PC-9 (cell line): ENCODE measurements at regions of chr22 and their contacts with region 1.

Region 1: GRCh38 chr22:23767673-23768548 is at the start of gene CHCHD10:
- DNase-seq: peak; percentile 62 to 73
- H3K4me3 ChIP-seq: peak within 1 kb of the TSS; percentile 96
- H3K27ac ChIP-seq: no peak within 1 kb of the TSS
- H3K4me1 ChIP-seq: peaks cover 22% of the 10 kb centered on the region
- H3K27me3 ChIP-seq: no peaks in the 10 kb centered on the region
- CTCF ChIP-seq: peak; percentile 81
- total RNA-seq, gene CHCHD10: 37.0 and 43.5 TPM in 2 replicates

Region 2: GRCh38 chr22:23716811-23717801 is 50.8 kb before region 1 on chr22:
- CTCF ChIA-PET with region 1: interaction called, 6 read pairs
- POLR2A ChIA-PET with region 1: interaction called, 18 read pairs
- intact Hi-C with region 1: no loop called
- DNase-seq: peak; percentile 49 to 68
- H3K4me3 ChIP-seq: peak overlapping the region; percentile 92
- H3K27ac ChIP-seq: no peak overlapping the region
- H3K4me1 ChIP-seq: 0 out of 2 replicates have a peak, but pooled peaks cover 8% of the 10 kb centered on the region
- H3K27me3 ChIP-seq: no peaks in the 10 kb centered on the region
- CTCF ChIP-seq: no peak

Region 3: GRCh38 chr22:23789638-23790037 is 21.7 kb after region 1 on chr22:
- CTCF ChIA-PET with region 1: no interaction called
- POLR2A ChIA-PET with region 1: no interaction called
- intact Hi-C with region 1: no loop called
- DNase-seq: no peak
- H3K4me3 ChIP-seq: no peak overlapping the region
- H3K27ac ChIP-seq: no peak overlapping the region
- H3K4me1 ChIP-seq: peaks cover 21% of the 10 kb centered on the region
- H3K27me3 ChIP-seq: no peaks in the 10 kb centered on the region
- CTCF ChIP-seq: no peak

Region 4: DNA sequence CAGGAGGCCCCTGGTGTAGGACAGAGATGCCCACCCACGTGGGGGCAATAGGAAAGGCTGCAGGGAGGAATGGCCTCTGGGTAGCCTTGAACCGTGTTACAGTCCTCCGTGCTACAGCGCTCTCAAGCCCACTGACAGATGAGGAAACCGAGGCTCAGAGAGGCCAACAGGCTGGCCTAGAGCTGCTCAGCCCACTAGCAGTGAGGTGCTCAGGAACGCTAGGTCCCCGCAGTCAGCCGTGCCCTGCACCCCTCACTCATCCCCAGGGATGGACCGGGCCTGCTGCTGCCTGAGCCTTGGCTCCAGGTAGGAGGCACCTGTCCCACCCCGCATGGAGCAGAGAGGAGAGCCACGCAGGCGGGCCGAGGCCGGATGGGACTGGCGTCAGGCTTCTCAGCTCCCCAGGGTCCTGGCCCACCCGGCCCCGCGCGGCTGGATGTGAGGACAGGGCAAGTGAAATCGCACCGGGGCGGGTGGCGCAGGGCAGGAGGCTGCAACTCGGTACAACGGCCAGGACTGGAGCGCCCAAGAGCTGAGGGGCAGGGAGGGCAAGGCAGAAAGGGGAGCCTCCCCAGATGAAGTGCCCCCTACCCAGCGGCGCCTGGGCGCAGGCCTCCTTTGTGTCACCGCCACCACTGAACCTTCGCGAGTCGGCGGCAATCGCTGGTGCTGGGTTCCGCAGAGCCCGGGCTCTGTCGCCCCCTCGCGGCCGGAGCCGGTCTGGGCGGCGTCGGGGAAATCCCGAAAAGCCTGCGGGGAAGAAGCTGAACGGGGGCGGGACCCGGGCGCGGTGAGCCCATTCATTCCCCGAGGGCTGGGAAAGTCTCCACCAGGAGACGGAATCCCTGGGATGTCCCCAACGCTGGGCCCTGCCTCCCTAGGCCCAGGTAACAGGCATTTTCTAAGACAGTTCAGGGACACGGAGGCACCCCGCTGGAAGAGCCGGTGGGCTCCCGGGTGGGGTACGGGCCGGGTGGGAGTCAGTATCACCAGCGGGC is 81.4 kb after region 1 on chr22:
- CTCF ChIA-PET with region 1: interaction called, 10 read pairs
- POLR2A ChIA-PET with region 1: no interaction called
- intact Hi-C with region 1: no loop called
- DNase-seq: peak; percentile 51 to 84
- H3K4me3 ChIP-seq: no peak overlapping the region
- H3K27ac ChIP-seq: no peak overlapping the region
- H3K4me1 ChIP-seq: peaks cover 13% of the 10 kb centered on the region; the same call in 1 of the 2 replicates
- H3K27me3 ChIP-seq: no peaks in the 10 kb centered on the region
- CTCF ChIP-seq: peak; percentile 91

Region 5: DNA sequence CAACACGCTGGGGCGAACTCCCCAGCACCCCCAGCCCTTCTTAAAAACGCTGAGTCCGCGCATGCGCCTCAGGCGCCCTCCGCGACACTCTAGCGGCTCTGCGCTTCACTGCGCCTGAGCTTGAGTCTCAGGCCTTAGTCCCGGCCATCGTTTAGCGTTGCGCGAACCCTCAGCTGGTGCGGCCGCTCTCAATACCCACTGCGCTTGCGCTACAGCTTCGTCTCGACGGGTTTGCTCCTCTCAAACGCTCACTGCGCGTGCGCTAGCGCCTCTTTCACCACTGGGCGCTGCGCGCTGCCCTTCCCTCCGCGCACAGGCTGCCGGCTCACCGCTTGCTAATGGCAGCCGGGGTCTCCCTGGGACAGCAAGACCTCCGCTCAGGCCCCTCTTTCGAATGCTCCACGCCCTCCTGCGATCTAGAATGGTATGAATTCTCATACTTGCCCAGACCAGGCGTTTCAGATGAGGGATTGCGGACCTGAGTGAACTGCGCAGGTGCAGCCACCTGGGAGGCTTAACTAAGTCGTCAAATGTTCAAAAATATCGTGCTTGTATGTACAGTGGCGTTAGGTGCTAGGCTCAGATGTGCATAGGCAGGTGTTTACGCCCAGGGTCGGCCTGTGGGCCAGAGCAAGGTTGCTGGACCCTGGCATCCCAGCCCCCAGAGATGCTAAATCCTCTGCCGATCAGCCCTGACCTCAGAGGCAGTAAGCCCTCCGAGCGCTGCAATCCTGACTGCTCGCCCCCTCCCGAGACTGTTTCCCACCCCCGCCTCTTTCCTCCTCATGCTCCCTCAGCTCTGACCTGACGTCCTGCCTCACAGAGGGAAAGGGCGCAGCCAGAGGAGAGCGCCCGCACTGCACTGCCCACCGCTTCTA is 89.9 kb after region 1 on chr22 and contains the start of gene SLC2A11:
- CTCF ChIA-PET with region 1: interaction called, 9 read pairs
- POLR2A ChIA-PET with region 1: interaction called, 22 read pairs
- intact Hi-C with region 1: loop called (anchors 5 kb)
- DNase-seq: peak; percentile 88 to 89
- H3K4me3 ChIP-seq: peak within 1 kb of the TSS; percentile 77
- H3K27ac ChIP-seq: peak within 1 kb of the TSS; percentile 86
- H3K4me1 ChIP-seq: peaks cover 10% of the 10 kb centered on the region; the same call in 1 of the 2 replicates
- H3K27me3 ChIP-seq: no peaks in the 10 kb centered on the region
- CTCF ChIP-seq: no peak
- total RNA-seq, gene SLC2A11: 24.0 and 26.9 TPM in 2 replicates